K562 (cell line): ENCODE measurements at regions of chr15 and their contacts with region 1.

Region 1: GRCh38 chr15:48861813-48862431 is 16.0 kb upstream of the EID1 start:
- DNase-seq: peak; percentile 41 to 76 (median 49)
- ATAC-seq: peak; percentile 77
- H3K4me3 ChIP-seq: no peak overlapping the region
- H3K27ac ChIP-seq: no peak overlapping the region
- H3K4me1 ChIP-seq: peaks cover 0 to 8% of the 10 kb centered on the region in 2 experiments; a peak in 4 of 5 replicates
- H3K27me3 ChIP-seq: no peaks in the 10 kb centered on the region
- CTCF ChIP-seq: peak; percentile 73 to 92 (median 78)
- EP300 ChIP-seq: no peak
- POLR2A ChIP-seq: no peak
- RAD21 ChIP-seq: peak; percentile 99

Region 2: GRCh38 chr15:48914717-48915116 is 52.8 kb after region 1 on chr15:
- CTCF ChIA-PET with region 1: no interaction called
- POLR2A ChIA-PET with region 1: no interaction called
- in situ Hi-C with region 1: no loop called
- intact Hi-C with region 1: loop called (anchors 1 kb)
- DNase-seq: no peak
- ATAC-seq: peak; percentile 67
- H3K4me3 ChIP-seq: no peak overlapping the region
- H3K27ac ChIP-seq: no peak overlapping the region
- H3K4me1 ChIP-seq: peaks cover 5 to 9% of the 10 kb centered on the region in 2 experiments; a peak in 2 of 5 replicates
- H3K27me3 ChIP-seq: no peaks in the 10 kb centered on the region
- CTCF ChIP-seq: peak in 1 of 3 experiments; percentile 36; a peak in 2 of 6 replicates
- EP300 ChIP-seq: no peak
- POLR2A ChIP-seq: no peak
- RAD21 ChIP-seq: peak in 1 of 2 experiments; percentile 52; a peak in 2 of 4 replicates

Region 3: DNA sequence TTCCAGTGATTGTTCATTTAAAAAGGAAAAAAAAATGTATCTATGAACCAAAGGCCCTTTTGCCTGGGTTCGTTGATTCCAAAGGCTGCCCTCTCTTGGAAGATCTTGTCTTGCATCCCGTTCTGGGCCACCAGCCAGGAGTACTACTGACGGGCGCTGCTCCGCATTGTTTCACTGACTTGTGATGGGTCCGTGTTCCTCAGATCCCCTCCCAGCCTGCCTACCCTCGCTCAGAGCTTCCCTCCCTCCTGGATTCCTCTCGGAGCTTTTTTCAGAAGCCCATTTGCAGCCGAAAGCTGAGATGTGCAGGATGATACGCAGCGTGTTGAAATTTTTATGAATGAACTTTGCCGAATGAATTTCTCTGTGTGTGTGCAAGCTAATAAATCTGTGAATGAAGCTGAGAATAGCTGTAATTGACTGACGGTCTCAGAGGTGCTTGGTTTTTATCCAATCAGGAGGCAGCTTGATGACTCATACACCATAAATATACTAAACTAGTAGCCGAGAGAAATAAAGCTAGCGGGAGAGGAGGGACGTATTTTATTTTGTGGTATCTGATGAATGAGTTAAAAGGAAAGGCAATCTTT is 101.7 kb after region 1 on chr15 and contains the start of gene SHC4:
- CTCF ChIA-PET with region 1: interaction called, 21 read pairs
- POLR2A ChIA-PET with region 1: no interaction called
- in situ Hi-C with region 1: loop called (anchors 5 kb)
- intact Hi-C with region 1: loop called (anchors 1 kb)
- DNase-seq: peak; percentile 42 to 61 (median 54)
- ATAC-seq: peak; percentile 60
- H3K4me3 ChIP-seq: peak within 1 kb of the TSS; percentile 16; the same call in 1 of the 2 replicates
- H3K27ac ChIP-seq: no peak within 1 kb of the TSS
- H3K4me1 ChIP-seq: peaks cover 4 to 12% of the 10 kb centered on the region in 2 experiments; a peak in 4 of 5 replicates
- H3K27me3 ChIP-seq: peaks cover 29 to 44% of the 10 kb centered on the region in 2 experiments
- CTCF ChIP-seq: peak in 2 of 3 experiments; percentile 26 to 27; a peak in 2 of 6 replicates
- EP300 ChIP-seq: no peak
- POLR2A ChIP-seq: no peak
- RAD21 ChIP-seq: peak in 1 of 2 experiments; percentile 21; a peak in 1 of 4 replicates
- polyA plus RNA-seq, gene SHC4: 0.67 to 1.0 TPM

Region 4: GRCh38 chr15:49075885-49076284 is 214.0 kb after region 1 on chr15:
- CTCF ChIA-PET with region 1: no interaction called
- POLR2A ChIA-PET with region 1: no interaction called
- in situ Hi-C with region 1: no loop called
- intact Hi-C with region 1: loop called (anchors 5 kb)
- DNase-seq: no peak
- ATAC-seq: no peak
- H3K4me3 ChIP-seq: no peak overlapping the region
- H3K27ac ChIP-seq: no peak overlapping the region
- H3K4me1 ChIP-seq: peaks cover 0 to 4% of the 10 kb centered on the region in 2 experiments; a peak in 1 of 5 replicates
- H3K27me3 ChIP-seq: no peaks in the 10 kb centered on the region
- CTCF ChIP-seq: no peak
- EP300 ChIP-seq: no peak
- POLR2A ChIP-seq: no peak
- RAD21 ChIP-seq: no peak

Region 5: DNA sequence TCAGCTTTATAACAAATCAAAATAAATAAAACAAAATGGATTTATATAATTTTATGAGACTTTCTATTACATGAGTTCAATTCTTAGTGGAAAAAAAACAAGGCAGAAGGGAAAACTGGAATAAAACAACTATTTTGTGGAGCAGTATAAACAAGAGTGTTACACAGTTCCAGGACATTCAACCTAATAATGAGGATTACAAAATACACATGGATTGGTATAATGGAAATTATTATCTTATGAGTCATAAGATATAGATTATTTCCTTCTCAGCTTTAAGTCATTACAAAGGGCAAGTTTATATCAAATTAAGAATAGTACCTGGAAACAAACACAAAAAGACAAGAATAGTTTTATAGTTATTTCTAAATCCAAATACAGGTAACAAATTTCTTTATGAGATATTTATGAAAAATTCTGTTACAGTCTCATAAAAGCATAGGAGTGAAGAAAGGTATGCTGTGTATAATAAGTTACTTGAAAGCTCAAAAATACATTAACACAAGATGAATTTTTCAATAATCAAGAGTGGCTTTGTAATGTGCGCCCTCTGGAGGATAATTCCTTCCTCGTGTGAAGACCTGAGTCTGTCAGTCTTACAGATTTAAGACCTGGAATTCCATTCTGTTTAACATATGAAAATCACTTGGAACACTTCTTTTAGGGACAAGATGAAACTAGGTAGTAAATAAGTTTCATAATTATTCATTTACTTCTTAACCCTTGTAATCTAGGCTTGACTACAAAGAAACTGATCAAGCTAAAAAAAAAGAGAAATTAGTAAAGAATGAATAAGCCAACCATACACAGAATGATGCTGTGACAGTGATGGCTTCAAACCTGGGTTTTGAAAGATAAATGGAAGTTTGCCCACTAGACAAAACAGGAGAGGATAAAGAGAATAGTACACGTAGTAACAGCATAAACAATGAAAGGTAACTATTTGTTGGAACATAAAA is 284.0 kb after region 1 on chr15:
- CTCF ChIA-PET with region 1: interaction called, 4 read pairs
- POLR2A ChIA-PET with region 1: no interaction called
- in situ Hi-C with region 1: no loop called
- intact Hi-C with region 1: loop called (anchors 1 kb)
- DNase-seq: peak in 3 of 4 experiments; percentile 17 to 63 (median 30)
- ATAC-seq: peak; percentile 79
- H3K4me3 ChIP-seq: no peak overlapping the region
- H3K27ac ChIP-seq: 0 out of 3 replicates have a peak overlapping the region, but pooled peaks have one; percentile 11
- H3K4me1 ChIP-seq: no peaks in the 10 kb centered on the region; a peak in 2 of 5 replicates
- H3K27me3 ChIP-seq: no peaks in the 10 kb centered on the region
- CTCF ChIP-seq: peak; percentile 41 to 66 (median 44); a peak in 5 of 6 replicates
- EP300 ChIP-seq: no peak
- POLR2A ChIP-seq: no peak
- RAD21 ChIP-seq: peak; percentile 50 to 59

Region 6: GRCh38 chr15:49225613-49226281 is 363.8 kb after region 1 on chr15:
- CTCF ChIA-PET with region 1: interaction called, 4 read pairs
- POLR2A ChIA-PET with region 1: no interaction called
- in situ Hi-C with region 1: loop called (anchors 10 kb)
- intact Hi-C with region 1: loop called (anchors 2 kb)
- DNase-seq: peak; percentile 14 to 87 (median 48)
- ATAC-seq: peak; percentile 98
- H3K4me3 ChIP-seq: no peak overlapping the region; the same call in 1 of the 2 replicates
- H3K27ac ChIP-seq: peak overlapping the region; percentile 60
- H3K4me1 ChIP-seq: peaks cover 7 to 11% of the 10 kb centered on the region in 2 experiments; a peak in 4 of 5 replicates
- H3K27me3 ChIP-seq: no peaks in the 10 kb centered on the region
- CTCF ChIP-seq: peak; percentile 68 to 83 (median 79)
- EP300 ChIP-seq: no peak
- POLR2A ChIP-seq: no peak
- RAD21 ChIP-seq: peak; percentile 59 to 81

Region 7: DNA sequence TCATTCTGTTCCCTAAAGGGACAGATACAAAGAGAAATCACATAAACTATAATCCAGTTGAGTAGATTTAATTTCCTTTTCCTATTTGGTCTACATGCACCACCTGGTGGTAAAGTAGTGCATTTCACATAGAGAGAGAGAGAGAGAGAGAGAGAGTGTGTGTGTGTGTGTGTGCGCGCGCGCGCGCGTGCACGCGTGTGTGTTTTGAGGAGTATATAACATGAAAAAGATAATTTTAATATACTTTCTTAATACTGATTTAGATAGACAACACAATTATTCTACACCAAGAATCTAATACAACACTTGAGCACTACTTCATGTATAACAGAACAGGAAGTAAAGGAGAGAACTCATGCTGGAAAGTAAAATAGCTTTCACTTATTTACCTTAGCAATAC is 560.1 kb after region 1 on chr15:
- CTCF ChIA-PET with region 1: interaction called, 9 read pairs
- POLR2A ChIA-PET with region 1: no interaction called
- in situ Hi-C with region 1: no loop called
- intact Hi-C with region 1: loop called (anchors 2 kb)
- DNase-seq: peak; percentile 24 to 63 (median 32)
- ATAC-seq: peak; percentile 63
- H3K4me3 ChIP-seq: no peak overlapping the region
- H3K27ac ChIP-seq: no peak overlapping the region
- H3K4me1 ChIP-seq: no peaks in the 10 kb centered on the region
- H3K27me3 ChIP-seq: no peaks in the 10 kb centered on the region
- CTCF ChIP-seq: peak; percentile 67 to 88 (median 78)
- EP300 ChIP-seq: no peak
- POLR2A ChIP-seq: no peak
- RAD21 ChIP-seq: peak; percentile 64 to 90